ENCODE measurements at regions of chr10 and their contacts with region 1.

Region 1: DNA sequence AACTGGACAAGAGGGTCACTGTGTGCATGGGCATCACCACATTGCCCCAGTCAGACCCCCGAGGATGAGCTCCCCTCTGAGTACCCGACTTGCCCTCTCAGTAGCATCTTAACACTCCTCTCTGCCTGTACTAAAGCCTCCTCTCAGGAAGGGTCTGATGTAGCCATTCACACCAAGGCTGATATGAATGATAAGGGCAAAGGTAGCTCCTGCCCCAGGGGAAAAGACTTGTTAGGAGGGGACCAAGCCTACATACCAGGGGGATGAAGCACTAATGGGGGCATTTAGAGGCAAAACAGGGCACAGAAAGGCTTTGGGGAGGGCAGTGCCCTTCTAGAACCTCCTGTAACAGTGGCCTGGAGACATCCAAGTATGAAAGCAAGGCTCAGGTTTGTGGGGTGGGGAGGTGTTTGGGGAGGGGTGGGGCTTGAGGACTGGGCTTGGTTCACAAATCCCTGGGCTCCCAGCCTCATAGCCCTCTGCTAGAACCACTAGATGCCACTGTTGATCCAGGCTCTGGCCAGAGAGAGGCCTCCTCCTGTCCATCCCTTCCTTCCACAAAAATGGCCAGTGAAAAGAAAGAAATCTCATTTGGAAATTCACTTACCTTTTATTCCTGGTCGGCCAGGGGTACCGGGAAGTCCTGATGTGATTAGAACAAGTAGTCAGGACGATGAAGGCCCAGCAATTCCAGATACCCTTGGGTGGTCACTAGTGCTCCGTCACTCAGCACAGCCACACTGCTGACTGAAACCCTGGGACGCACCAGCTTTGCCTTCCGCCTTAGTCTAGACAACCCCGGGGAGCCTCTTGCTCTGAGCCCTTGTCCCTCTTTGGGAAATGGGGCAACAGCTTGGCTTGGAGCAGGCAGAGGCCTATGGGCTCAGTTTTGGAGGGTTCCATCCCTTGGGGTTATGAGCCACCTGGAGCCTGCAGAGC is 40.3 kb downstream of the COL17A1 start:
- DNase-seq: peak; percentile 45
- ATAC-seq: peak; percentile 89
- H3K4me3 ChIP-seq: no peak overlapping the region
- H3K27ac ChIP-seq: no peak overlapping the region
- H3K4me1 ChIP-seq: peaks cover 9% of the 10 kb centered on the region
- H3K27me3 ChIP-seq: peaks cover 6 to 71% of the 10 kb centered on the region in 2 experiments
- CTCF ChIP-seq: peak; percentile 70
- EP300 ChIP-seq: no peak
- POLR2A ChIP-seq: no peak
- RAD21 ChIP-seq: peak; percentile 58

Region 2: GRCh38 chr10:104059364-104059763 is 13.9 kb after region 1 on chr10:
- CTCF ChIA-PET with region 1: no interaction called
- POLR2A ChIA-PET with region 1: no interaction called
- in situ Hi-C with region 1: no loop called
- intact Hi-C with region 1: no loop called
- DNase-seq: no peak
- ATAC-seq: no peak
- H3K4me3 ChIP-seq: no peak overlapping the region
- H3K27ac ChIP-seq: no peak overlapping the region
- H3K4me1 ChIP-seq: no peaks in the 10 kb centered on the region
- H3K27me3 ChIP-seq: peaks cover 3 to 14% of the 10 kb centered on the region in 2 experiments; a peak in 2 of 5 replicates
- CTCF ChIP-seq: no peak
- EP300 ChIP-seq: no peak
- POLR2A ChIP-seq: no peak
- RAD21 ChIP-seq: no peak

Region 3: GRCh38 chr10:104209575-104210198 is 164.3 kb after region 1 on chr10:
- CTCF ChIA-PET with region 1: interaction called, 13 read pairs
- POLR2A ChIA-PET with region 1: no interaction called
- in situ Hi-C with region 1: loop called (anchors 5 kb)
- intact Hi-C with region 1: loop called (anchors 1 kb)
- DNase-seq: peak; percentile 27
- ATAC-seq: peak; percentile 77
- H3K4me3 ChIP-seq: no peak overlapping the region
- H3K27ac ChIP-seq: no peak overlapping the region
- H3K4me1 ChIP-seq: no peaks in the 10 kb centered on the region
- H3K27me3 ChIP-seq: no peaks in the 10 kb centered on the region
- CTCF ChIP-seq: peak; percentile 66
- EP300 ChIP-seq: no peak
- POLR2A ChIP-seq: no peak
- RAD21 ChIP-seq: 0 out of 2 replicates have a peak, but pooled peaks have one; percentile 36